ENCODE measurements at regions of chr6 and their contacts with region 1.

Region 1: GRCh38 chr6:131116749-131117360 is 18.4 kb upstream of the AKAP7 start:
- DNase-seq: no peak
- ATAC-seq: peak in 3 of 4 donors; percentile 76 to 83 (median 83)
- H3K4me3 ChIP-seq: no peak overlapping the region
- H3K27ac ChIP-seq: no peak overlapping the region
- H3K4me1 ChIP-seq: no peaks in the 10 kb centered on the region
- H3K27me3 ChIP-seq: no peaks in the 10 kb centered on the region
- CTCF ChIP-seq: peak; percentile 15 to 31 (median 24)

Region 2: GRCh38 chr6:130453230-130453629 is 663.6 kb before region 1 on chr6:
- intact Hi-C with region 1: no loop called
- DNase-seq: no peak
- ATAC-seq: peak in 2 of 4 donors; percentile 59 to 78
- H3K4me3 ChIP-seq: no peak overlapping the region
- H3K27ac ChIP-seq: no peak overlapping the region
- H3K4me1 ChIP-seq: no peaks in the 10 kb centered on the region
- H3K27me3 ChIP-seq: no peaks in the 10 kb centered on the region
- CTCF ChIP-seq: no peak

Region 3: DNA sequence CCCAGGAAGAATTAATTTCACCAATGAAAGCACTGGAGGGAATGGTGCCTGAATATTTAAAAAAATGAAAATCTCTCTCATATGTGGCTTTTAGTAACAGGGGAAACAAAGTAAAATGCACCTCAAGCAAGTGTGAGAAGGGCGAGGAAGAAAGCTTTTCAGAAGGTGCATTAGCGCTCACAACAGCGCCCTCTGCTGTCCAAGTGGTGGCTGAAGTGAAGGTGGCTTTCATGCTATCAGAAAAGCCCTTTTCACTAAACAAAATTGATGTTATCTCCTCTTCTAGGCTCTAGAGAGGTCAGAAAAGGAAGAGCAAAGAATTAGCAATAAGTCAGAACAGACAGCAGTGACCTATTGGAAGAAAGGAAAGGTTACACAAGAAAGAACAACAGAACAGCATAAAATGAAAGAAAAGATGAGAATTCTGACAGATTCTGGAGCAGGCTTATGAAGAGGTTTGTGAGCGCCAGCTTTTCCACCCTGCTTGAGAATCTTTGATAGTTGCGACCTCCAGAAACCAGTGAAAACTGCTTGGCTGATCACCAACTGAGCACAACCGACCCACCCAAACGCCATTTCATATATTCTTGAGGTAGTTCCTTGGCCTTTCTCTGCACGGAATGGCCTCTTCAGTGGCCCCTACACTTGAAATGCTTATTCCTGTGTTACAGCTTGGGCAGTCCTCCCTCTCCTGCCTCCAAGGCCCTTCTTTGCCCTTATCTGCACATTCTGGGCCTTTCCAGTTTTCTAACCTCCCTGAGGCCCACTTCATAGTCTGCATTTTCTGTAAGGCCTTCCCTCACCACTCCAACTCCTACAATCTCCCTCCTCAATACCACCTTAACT is 244.4 kb before region 1 on chr6:
- intact Hi-C with region 1: loop called in 1 of 3 experiments (anchors 10 kb)
- DNase-seq: peak in 5 of 6 donors; percentile 18 to 89 (median 51)
- ATAC-seq: peak in 3 of 4 donors; percentile 66 to 74 (median 70)
- H3K4me3 ChIP-seq: no peak overlapping the region
- H3K27ac ChIP-seq: no peak overlapping the region
- H3K4me1 ChIP-seq: no peaks in the 10 kb centered on the region
- H3K27me3 ChIP-seq: no peaks in the 10 kb centered on the region
- CTCF ChIP-seq: peak; percentile 54 to 90 (median 79)

Region 4: GRCh38 chr6:130997061-130997753 is 119.6 kb before region 1 on chr6:
- intact Hi-C with region 1: no loop called
- DNase-seq: no peak
- ATAC-seq: no peak
- H3K4me3 ChIP-seq: no peak overlapping the region
- H3K27ac ChIP-seq: no peak overlapping the region
- H3K4me1 ChIP-seq: peaks cover 0 to 20% (median 10%) of the 10 kb centered on the region in 3 donors
- H3K27me3 ChIP-seq: no peaks in the 10 kb centered on the region
- CTCF ChIP-seq: no peak

Measured in pancreas (tissue), 10 donors.